ENCODE measurements at regions of chr2 and their contacts with region 1.

Region 1: DNA sequence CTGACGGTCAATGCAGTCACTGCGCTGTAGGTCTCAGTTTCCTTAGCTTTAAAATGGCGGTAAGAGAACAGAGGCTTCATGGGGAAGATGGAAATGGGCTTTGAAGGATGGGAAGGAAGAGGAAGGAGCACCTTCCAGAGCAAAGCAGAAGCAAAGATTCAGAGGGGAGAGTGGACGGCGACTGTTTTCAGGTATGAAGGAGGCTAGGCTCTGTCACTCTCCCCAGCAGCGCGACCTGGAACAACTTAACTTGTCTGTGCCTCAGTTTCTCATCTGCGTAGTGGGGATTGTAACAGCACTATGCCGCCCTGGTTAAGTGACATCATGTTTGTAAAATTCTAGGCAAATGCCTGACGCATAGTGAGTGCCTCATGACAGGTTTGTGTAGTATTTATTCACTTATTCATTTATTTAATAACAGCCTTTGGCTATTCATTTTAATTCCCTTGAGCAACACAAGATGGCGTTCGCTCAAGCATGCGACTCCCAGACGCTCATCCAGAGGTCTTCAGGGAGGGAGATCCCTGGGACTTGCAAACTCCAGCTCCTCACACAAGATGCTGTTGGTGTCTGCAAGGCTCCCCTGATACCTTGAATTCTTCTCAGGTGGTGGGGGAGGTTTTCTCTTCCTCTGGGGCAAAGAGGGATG is 336.3 kb downstream of the DYSF start:
- DNase-seq: no peak
- ATAC-seq: no peak
- H3K4me3 ChIP-seq: no peak overlapping the region
- H3K27ac ChIP-seq: no peak overlapping the region
- H3K4me1 ChIP-seq: peaks cover 15% of the 10 kb centered on the region
- H3K27me3 ChIP-seq: no peaks in the 10 kb centered on the region
- CTCF ChIP-seq: no peak

Region 2: GRCh38 chr2:71767663-71768062 is 22.0 kb before region 1 on chr2:
- CTCF ChIA-PET with region 1: no interaction called
- POLR2A ChIA-PET with region 1: no interaction called
- in situ Hi-C with region 1: no loop called
- intact Hi-C with region 1: no loop called
- DNase-seq: no peak
- ATAC-seq: no peak
- H3K4me3 ChIP-seq: no peak overlapping the region
- H3K27ac ChIP-seq: no peak overlapping the region
- H3K4me1 ChIP-seq: no peaks in the 10 kb centered on the region
- H3K27me3 ChIP-seq: no peaks in the 10 kb centered on the region
- CTCF ChIP-seq: no peak

Region 3: DNA sequence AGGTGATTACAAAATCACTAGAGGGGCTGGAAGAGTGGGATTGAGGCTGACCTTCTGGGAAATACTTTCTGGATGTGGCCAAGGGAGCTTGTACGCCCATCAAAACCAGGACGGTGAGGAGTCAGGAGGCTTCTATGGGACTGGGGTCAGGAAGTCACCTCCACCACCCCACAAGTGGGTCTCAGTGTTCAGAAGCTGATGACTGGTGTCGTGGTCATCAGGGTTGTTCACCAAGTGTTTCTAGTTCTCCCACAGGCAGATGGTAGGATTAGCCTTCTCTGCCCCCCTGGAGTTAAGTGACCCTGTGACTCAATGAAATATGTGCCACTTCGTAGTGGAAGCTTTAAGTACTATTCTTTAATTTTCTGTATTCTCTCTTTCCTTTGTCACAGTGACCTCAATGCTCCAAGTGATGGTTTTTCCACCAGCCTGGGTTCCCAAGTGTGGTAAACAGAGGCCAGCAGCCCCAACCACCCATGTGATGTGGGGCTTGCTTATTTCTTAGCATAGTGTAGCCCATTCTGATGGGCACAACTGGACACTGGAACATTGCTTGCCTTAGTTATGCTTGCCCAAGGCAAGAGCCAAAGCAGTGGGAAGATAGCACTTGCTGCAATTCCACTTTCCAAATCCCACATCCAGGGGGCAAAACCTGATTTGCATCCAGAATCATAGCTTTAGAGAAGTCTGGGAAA is 99.2 kb after region 1 on chr2:
- CTCF ChIA-PET with region 1: interaction called, 12 read pairs
- POLR2A ChIA-PET with region 1: no interaction called
- in situ Hi-C with region 1: no loop called
- intact Hi-C with region 1: no loop called
- DNase-seq: no peak
- ATAC-seq: no peak
- H3K4me3 ChIP-seq: no peak overlapping the region
- H3K27ac ChIP-seq: no peak overlapping the region
- H3K4me1 ChIP-seq: no peaks in the 10 kb centered on the region; the same call in 1 of the 2 replicates
- H3K27me3 ChIP-seq: peaks cover 12% of the 10 kb centered on the region
- CTCF ChIP-seq: no peak

Region 4: GRCh38 chr2:72515696-72516095 is 726.0 kb after region 1 on chr2:
- CTCF ChIA-PET with region 1: no interaction called
- POLR2A ChIA-PET with region 1: interaction called, 15 read pairs
- in situ Hi-C with region 1: no loop called
- intact Hi-C with region 1: no loop called
- DNase-seq: no peak
- ATAC-seq: no peak
- H3K4me3 ChIP-seq: no peak overlapping the region
- H3K27ac ChIP-seq: no peak overlapping the region
- H3K4me1 ChIP-seq: no peaks in the 10 kb centered on the region
- H3K27me3 ChIP-seq: no peaks in the 10 kb centered on the region
- CTCF ChIP-seq: no peak

Measured in Panc1 (cell line).